CD14-positive monocyte (primary cell): ENCODE measurements at regions of chr2 and their contacts with region 1.

Region 1: GRCh38 chr2:179340668-179341067 is 76.0 kb upstream of the SESTD1 start:
- DNase-seq: peak; percentile 4 to 30 (median 27)
- H3K4me3 ChIP-seq: no peak overlapping the region
- H3K4me3 Mint-ChIP-seq: no peak overlapping the region
- H3K27ac ChIP-seq: no peak overlapping the region
- H3K27ac Mint-ChIP-seq: no peak overlapping the region
- H3K4me1 ChIP-seq: peaks cover 0 to 8% of the 10 kb centered on the region in 2 donors
- H3K4me1 Mint-ChIP-seq: peaks cover 19% of the 10 kb centered on the region
- H3K27me3 ChIP-seq: no peaks in the 10 kb centered on the region
- H3K27me3 Mint-ChIP-seq: no peaks in the 10 kb centered on the region
- CTCF ChIP-seq: peak; percentile 52

Region 2: GRCh38 chr2:179226203-179226960 is 114.3 kb before region 1 on chr2:
- intact Hi-C with region 1: loop called (anchors 10 kb)
- DNase-seq: peak in 1 of 3 donors; percentile 1
- H3K4me3 ChIP-seq: no peak overlapping the region
- H3K4me3 Mint-ChIP-seq: no peak overlapping the region
- H3K27ac ChIP-seq: no peak overlapping the region
- H3K27ac Mint-ChIP-seq: no peak overlapping the region
- H3K4me1 ChIP-seq: no peaks in the 10 kb centered on the region
- H3K4me1 Mint-ChIP-seq: peaks cover 9% of the 10 kb centered on the region
- H3K27me3 ChIP-seq: no peaks in the 10 kb centered on the region
- H3K27me3 Mint-ChIP-seq: no peaks in the 10 kb centered on the region
- CTCF ChIP-seq: no peak

Region 3: GRCh38 chr2:179595284-179595683 is 254.6 kb after region 1 on chr2:
- intact Hi-C with region 1: no loop called
- DNase-seq: no peak
- H3K4me3 ChIP-seq: no peak overlapping the region
- H3K4me3 Mint-ChIP-seq: no peak overlapping the region
- H3K27ac ChIP-seq: no peak overlapping the region
- H3K27ac Mint-ChIP-seq: no peak overlapping the region
- H3K4me1 ChIP-seq: no peaks in the 10 kb centered on the region
- H3K4me1 Mint-ChIP-seq: no peaks in the 10 kb centered on the region
- H3K27me3 ChIP-seq: no peaks in the 10 kb centered on the region
- H3K27me3 Mint-ChIP-seq: no peaks in the 10 kb centered on the region
- CTCF ChIP-seq: no peak